Aorta (tissue), 5 donors: ENCODE measurements at regions of chr14 and their contacts with region 1.

Region 1: GRCh38 chr14:21510735-21511657 is at the start of gene METTL3:
- DNase-seq: peak; percentile 98 to 99
- ATAC-seq: peak; percentile 99
- H3K4me3 ChIP-seq: peak within 1 kb of the TSS; percentile 69 to 88
- H3K27ac ChIP-seq: peak within 1 kb of the TSS in 1 of 2 donors; percentile 79
- H3K4me1 ChIP-seq: no peaks in the 10 kb centered on the region
- H3K27me3 ChIP-seq: no peaks in the 10 kb centered on the region
- total RNA-seq, gene METTL3: 32.5 to 45.5 TPM

Region 2: GRCh38 chr14:21476925-21477681 is 33.9 kb before region 1 on chr14 and contains the starts of genes RAB2B and TOX4:
- intact Hi-C with region 1: loop called (anchors 5 kb)
- DNase-seq: peak; percentile 96 to 97
- ATAC-seq: peak; percentile 100
- H3K4me3 ChIP-seq: peak within 1 kb of the TSS; percentile 68 to 87
- H3K27ac ChIP-seq: peak within 1 kb of the TSS in 1 of 2 donors; percentile 87
- H3K4me1 ChIP-seq: no peaks in the 10 kb centered on the region
- H3K27me3 ChIP-seq: no peaks in the 10 kb centered on the region
- total RNA-seq, gene RAB2B: 30.5 to 31.6 TPM
- total RNA-seq, gene TOX4: 67.8 to 75.7 TPM

Region 3: DNA sequence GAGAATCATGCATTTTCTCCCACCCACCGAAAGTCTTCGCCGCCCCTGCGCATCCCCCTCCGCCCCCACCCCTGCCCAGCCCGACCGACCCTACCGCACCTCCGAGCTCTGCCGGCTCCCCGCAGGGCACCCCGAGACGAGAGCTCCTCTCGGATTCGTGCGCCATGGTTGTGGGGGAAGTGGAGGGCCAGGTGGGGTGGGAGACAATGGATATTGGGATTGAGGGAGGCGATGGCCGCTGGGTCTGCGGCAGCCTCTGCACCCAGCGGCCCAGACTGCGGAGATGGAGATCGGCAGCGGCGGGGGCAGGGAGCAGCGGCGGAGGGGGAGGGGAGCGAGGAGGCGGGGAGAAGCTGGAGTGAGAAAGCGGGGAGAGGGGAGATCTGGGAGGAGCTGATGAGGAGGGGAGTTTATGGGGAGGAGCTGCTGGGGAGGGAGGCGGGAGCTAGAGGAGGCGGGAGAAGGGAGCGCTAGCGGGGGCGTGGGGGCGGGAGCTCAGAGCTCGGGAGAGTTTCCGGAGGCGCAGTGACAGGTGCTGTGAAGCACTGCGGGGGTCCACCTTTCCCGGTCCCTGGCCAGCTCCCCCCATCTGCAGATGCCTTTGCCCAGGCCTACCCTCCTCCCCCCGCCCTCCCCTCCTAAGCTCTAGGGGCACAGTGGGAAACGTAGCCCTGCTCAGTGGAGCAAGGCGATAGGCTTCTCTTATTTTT is 15.1 kb after region 1 on chr14 and contains the start of gene SALL2:
- intact Hi-C with region 1: loop called in 1 of 2 experiments (anchors 1 kb)
- DNase-seq: peak; percentile 83 to 91
- ATAC-seq: peak; percentile 89
- H3K4me3 ChIP-seq: peak within 1 kb of the TSS; percentile 62 to 97
- H3K27ac ChIP-seq: no peak within 1 kb of the TSS
- H3K4me1 ChIP-seq: no peaks in the 10 kb centered on the region
- H3K27me3 ChIP-seq: no peaks in the 10 kb centered on the region
- total RNA-seq, gene SALL2: 9.2 to 12.2 TPM

Region 4: GRCh38 chr14:21557084-21557901 is 46.3 kb after region 1 on chr14:
- intact Hi-C with region 1: loop called in 1 of 2 experiments (anchors 5 kb)
- DNase-seq: peak in 1 of 2 donors; percentile 56
- ATAC-seq: peak; percentile 88
- H3K4me3 ChIP-seq: peak overlapping the region; percentile 26 to 57
- H3K27ac ChIP-seq: no peak overlapping the region
- H3K4me1 ChIP-seq: no peaks in the 10 kb centered on the region
- H3K27me3 ChIP-seq: no peaks in the 10 kb centered on the region

Region 5: GRCh38 chr14:21807975-21808374 is 297.0 kb after region 1 on chr14:
- intact Hi-C with region 1: no loop called
- DNase-seq: no peak
- ATAC-seq: no peak
- H3K4me3 ChIP-seq: no peak overlapping the region
- H3K27ac ChIP-seq: no peak overlapping the region
- H3K4me1 ChIP-seq: no peaks in the 10 kb centered on the region
- H3K27me3 ChIP-seq: no peaks in the 10 kb centered on the region